ENCODE measurements at regions of chr15 and their contacts with region 1.

Region 1: GRCh38 chr15:74036271-74037170 is 42.0 kb downstream of the PML start:
- DNase-seq: peak; percentile 69
- ATAC-seq: no peak

Region 2: GRCh38 chr15:73972984-73973682 is 63.4 kb before region 1 on chr15:
- intact Hi-C with region 1: loop called (anchors 5 kb)
- DNase-seq: peak; percentile 90
- ATAC-seq: peak; percentile 95

Region 3: GRCh38 chr15:73991726-73992593 is 44.6 kb before region 1 on chr15 and contains the start of gene STOML1:
- intact Hi-C with region 1: loop called (anchors 10 kb)
- DNase-seq: peak; percentile 97
- ATAC-seq: peak; percentile 93
- total RNA-seq, gene STOML1: 26.8 TPM

Measured in Right ventricle myocardium superior (tissue), 1 donor.